Activated CD8-positive, alpha-beta memory T cell treated with anti-CD3 and anti-CD28 coated beads, Interleukin-2, amount 10 ng/mL, durations not matched to agents 7 days and 5 days (primary cell): ENCODE measurements at regions of chr5 and their contacts with region 1.

Region 1: DNA sequence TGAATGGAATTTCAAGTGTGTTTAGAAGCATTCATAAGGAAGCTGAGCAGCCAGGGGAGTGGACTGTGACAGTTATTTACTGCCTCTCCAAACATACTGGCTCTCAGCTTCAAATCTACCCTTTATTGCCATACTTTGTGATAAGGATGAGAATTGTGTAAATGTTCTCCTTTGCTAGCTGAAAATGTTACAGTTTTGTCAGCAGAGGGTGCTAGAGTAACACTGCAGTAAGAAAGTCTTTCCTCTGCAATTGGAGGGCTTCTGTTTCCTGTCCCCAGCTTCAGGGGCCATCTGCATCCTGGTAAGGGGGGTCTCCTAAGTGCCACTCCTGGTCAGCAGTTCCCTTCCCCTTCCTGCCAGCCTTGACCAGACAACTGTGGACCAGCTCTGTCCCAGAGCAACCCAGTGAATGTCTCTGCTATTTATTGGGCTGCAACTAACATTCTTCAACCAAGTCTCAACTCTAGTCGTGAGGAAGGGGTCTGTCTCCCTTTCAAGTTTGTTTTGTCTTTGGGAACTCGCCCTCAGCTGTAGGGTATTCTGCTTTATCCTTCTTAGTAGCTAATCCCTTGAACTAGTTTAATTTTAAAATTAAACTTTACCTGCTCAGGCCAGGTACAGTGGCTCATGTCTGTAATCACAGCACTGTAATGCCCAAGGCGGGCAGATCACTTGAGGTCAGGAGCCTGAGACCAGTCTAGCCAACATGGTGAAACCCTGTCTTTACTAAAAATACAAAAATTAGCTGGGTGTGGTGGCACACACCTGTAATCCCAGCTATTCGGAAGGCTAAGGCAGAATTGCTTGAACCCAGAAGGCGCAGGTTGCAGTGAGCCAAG is 45.3 kb downstream of the RAPGEF6 start:
- DNase-seq: peak; percentile 51
- ATAC-seq: peak; percentile 74
- H3K4me3 Mint-ChIP-seq: no peak overlapping the region
- H3K27ac Mint-ChIP-seq: no peak overlapping the region
- H3K4me1 Mint-ChIP-seq: peaks cover 37% of the 10 kb centered on the region
- H3K27me3 Mint-ChIP-seq: no peaks in the 10 kb centered on the region

Region 2: DNA sequence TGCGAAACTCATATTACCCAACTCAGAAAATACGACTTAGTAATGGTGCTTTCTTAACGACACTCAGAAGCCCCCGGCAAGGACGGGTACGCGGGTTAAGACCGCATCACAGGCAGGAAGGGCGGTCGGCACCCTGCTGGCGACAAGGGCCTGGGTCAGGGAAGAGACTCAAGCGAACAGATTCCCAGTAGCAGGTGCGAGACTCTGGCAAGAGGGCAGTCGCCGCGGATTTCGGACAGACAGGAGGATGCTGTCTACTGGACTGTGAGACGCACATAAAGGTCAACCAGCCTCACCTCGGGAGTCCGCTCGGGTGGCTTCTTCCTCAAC is 44.9 kb after region 1 on chr5:
- CTCF ChIA-PET with region 1: interaction called, 22 read pairs
- DNase-seq: peak; percentile 85
- ATAC-seq: peak; percentile 36
- H3K4me3 Mint-ChIP-seq: peak overlapping the region; percentile 95
- H3K27ac Mint-ChIP-seq: peak overlapping the region; percentile 98
- H3K4me1 Mint-ChIP-seq: peaks cover 17% of the 10 kb centered on the region
- H3K27me3 Mint-ChIP-seq: peaks cover 2% of the 10 kb centered on the region

Region 3: GRCh38 chr5:131810510-131811249 is 221.0 kb after region 1 on chr5:
- CTCF ChIA-PET with region 1: interaction called, 11 read pairs
- DNase-seq: no peak
- ATAC-seq: peak; percentile 33
- H3K4me3 Mint-ChIP-seq: no peak overlapping the region
- H3K27ac Mint-ChIP-seq: no peak overlapping the region
- H3K4me1 Mint-ChIP-seq: no peaks in the 10 kb centered on the region
- H3K27me3 Mint-ChIP-seq: peaks cover 3% of the 10 kb centered on the region

Region 4: DNA sequence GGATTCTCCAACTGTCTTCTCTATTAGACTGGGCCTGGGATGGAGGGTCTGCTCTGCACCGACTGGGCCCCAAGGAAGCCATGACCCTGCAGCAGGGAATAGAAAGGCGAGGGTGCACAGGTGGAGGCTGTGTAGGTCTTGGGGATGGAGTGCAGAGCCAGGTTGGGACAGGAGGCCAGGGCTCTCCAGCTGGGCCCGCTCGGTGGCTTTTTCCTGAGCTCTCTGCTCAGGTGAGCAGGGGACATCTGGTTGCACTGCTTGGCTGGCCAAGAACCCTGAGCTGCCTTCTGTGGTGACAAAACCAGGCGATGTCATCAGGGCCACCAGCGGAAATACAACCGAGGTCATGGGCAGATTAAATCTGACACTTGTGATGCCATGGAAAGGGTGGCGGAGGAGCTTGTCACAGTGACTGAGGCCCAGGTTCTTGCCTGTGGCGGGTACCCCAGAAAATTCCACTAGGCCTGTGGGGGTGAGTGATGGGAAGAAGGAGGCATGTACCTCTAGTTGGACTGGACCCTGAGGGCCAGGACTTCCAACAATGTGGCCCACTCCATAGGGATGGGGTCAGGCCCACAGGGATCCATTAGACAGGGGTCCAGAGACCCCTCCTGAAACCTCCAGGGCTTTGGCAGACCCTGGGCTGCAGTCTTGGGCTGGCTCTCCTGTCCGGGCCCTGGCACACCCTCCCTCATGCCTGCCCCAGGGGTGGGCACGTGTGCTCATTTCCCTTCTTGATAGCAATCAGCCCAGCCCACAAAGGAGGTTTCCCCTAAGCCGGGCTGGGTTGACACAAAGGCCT is 466.3 kb after region 1 on chr5:
- CTCF ChIA-PET with region 1: interaction called, 11 read pairs
- DNase-seq: peak; percentile 77
- ATAC-seq: peak; percentile 76
- H3K4me3 Mint-ChIP-seq: no peak overlapping the region
- H3K27ac Mint-ChIP-seq: peak overlapping the region; percentile 34
- H3K4me1 Mint-ChIP-seq: peaks cover 64% of the 10 kb centered on the region
- H3K27me3 Mint-ChIP-seq: peaks cover 10% of the 10 kb centered on the region